Gastrocnemius medialis (tissue), 4 donors: ENCODE measurements at regions of chr2 and their contacts with region 1.

Region 1: GRCh38 chr2:215843579-215843978 is 169.8 kb downstream of the MREG start:
- DNase-seq: peak; percentile 68 to 77
- ATAC-seq: peak; percentile 94 to 97
- H3K4me3 ChIP-seq: no peak overlapping the region
- H3K27ac ChIP-seq: peak overlapping the region; percentile 45 to 72 (median 71)
- H3K4me1 ChIP-seq: peaks cover 0 to 41% of the 10 kb centered on the region in 2 donors
- H3K27me3 ChIP-seq: no peaks in the 10 kb centered on the region
- CTCF ChIP-seq: no peak
- POLR2A ChIP-seq: peak in 1 of 2 donors; percentile 21

Region 2: GRCh38 chr2:215900203-215900611 is 56.6 kb after region 1 on chr2:
- in situ Hi-C with region 1: no loop called
- intact Hi-C with region 1: loop called (anchors 2 kb)
- DNase-seq: peak; percentile 50 to 89
- ATAC-seq: peak; percentile 92 to 95
- H3K4me3 ChIP-seq: no peak overlapping the region
- H3K27ac ChIP-seq: peak overlapping the region in 2 of 4 donors; percentile 40 to 43
- H3K4me1 ChIP-seq: no peaks in the 10 kb centered on the region
- H3K27me3 ChIP-seq: no peaks in the 10 kb centered on the region
- CTCF ChIP-seq: no peak
- POLR2A ChIP-seq: no peak

Region 3: GRCh38 chr2:215973954-215974702 is 130.5 kb after region 1 on chr2:
- in situ Hi-C with region 1: no loop called
- intact Hi-C with region 1: no loop called
- DNase-seq: peak; percentile 34 to 44
- ATAC-seq: peak; percentile 100
- H3K4me3 ChIP-seq: no peak overlapping the region
- H3K27ac ChIP-seq: peak overlapping the region; percentile 57 to 74 (median 70)
- H3K4me1 ChIP-seq: peaks cover 13 to 17% of the 10 kb centered on the region in 2 donors
- H3K27me3 ChIP-seq: no peaks in the 10 kb centered on the region
- CTCF ChIP-seq: no peak
- POLR2A ChIP-seq: no peak

Region 4: GRCh38 chr2:216114714-216115557 is 271.4 kb after region 1 on chr2:
- in situ Hi-C with region 1: no loop called
- intact Hi-C with region 1: no loop called
- DNase-seq: peak; percentile 96 to 98
- ATAC-seq: peak; percentile 100
- H3K4me3 ChIP-seq: peak overlapping the region; percentile 56 to 71 (median 64)
- H3K27ac ChIP-seq: peak overlapping the region; percentile 78 to 87 (median 84)
- H3K4me1 ChIP-seq: peaks cover 22 to 34% of the 10 kb centered on the region in 2 donors
- H3K27me3 ChIP-seq: no peaks in the 10 kb centered on the region
- CTCF ChIP-seq: peak; percentile 85 to 87 (median 86)
- POLR2A ChIP-seq: peak in 1 of 2 donors; percentile 37

Region 5: DNA sequence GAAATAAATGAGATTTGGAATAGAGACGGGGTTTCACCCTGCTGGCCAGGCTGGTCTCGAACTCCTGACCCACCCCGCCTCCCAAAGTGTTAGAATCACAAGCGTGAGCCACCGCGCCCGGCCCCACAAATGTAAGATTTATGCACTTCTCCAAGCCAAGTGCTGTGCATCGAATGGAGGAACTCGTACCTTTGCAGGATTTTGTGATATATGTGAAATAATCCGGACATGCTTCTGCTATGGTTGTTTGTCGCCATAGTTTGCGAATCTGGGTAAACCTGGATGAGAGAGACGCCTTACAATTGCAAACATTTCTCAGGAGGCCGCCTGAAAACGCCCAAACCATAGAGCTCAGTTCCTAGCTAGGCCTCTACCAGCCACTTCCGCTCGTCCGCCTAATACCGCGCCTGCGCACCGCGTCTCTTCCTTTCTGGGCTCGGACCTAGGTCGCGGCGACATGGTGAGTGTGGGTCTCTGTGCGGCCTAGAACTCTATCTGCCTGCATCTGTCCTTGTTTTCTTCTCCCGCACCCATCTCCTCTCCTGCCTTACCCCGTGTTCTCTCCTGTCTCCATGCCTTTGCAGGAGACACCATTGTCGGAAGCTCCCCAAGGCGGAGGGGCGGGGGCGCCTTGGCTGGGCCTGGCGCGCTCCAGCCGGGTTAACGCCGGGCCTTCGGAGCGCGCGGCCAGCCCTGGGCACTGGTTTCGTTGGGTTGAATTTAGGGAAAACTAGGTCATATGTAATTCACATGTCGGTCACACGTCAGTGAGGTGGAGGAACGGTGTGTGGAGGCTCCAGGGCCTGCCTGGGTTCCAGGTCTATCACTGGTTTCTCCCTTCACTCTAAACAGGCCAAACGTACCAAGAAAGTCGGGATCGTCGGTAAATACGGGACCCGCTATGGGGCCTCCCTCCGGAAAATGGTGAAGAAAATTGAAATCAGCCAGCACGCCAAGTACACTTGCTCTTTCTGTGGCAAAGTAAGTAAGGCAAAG is 655.1 kb after region 1 on chr2 and contains the start of gene RPL37A:
- in situ Hi-C with region 1: no loop called
- intact Hi-C with region 1: no loop called
- DNase-seq: peak; percentile 87 to 91
- ATAC-seq: peak; percentile 97 to 98
- H3K4me3 ChIP-seq: peak within 1 kb of the TSS; percentile 70 to 90 (median 80)
- H3K27ac ChIP-seq: peak within 1 kb of the TSS; percentile 81 to 89 (median 84)
- H3K4me1 ChIP-seq: peaks cover 26% of the 10 kb centered on the region in 2 donors
- H3K27me3 ChIP-seq: no peaks in the 10 kb centered on the region
- CTCF ChIP-seq: peak in 1 of 5 experiments; percentile 17
- POLR2A ChIP-seq: peak; percentile 93 to 94
- total RNA-seq, gene RPL37A: 1,065 to 1,506 (median 1,390) TPM